ENCODE measurements at regions of chr3 and their contacts with region 1.

Region 1: DNA sequence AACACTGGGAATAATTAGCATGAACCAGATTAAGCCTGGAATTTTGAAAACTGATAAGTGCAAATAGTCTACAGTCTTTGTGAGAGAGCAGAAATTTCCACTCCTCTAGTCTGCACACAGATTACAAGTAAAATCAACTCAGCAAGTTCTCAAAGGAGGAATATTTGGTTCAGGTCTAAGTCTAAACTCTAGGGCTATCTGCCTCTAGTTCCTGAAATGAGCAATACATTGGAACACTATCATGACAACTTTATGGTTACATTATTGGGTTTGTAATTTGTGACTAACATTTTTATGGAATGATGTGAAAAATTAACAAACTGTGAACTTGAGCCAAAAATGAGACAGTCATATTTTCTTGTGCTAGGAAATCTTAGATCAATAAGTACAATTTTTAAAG is 30.8 kb upstream of the ADGRG7 start:
- DNase-seq: no peak
- ATAC-seq: no peak
- H3K4me3 ChIP-seq: no peak overlapping the region
- H3K27ac ChIP-seq: no peak overlapping the region
- H3K4me1 ChIP-seq: no peaks in the 10 kb centered on the region
- H3K27me3 ChIP-seq: no peaks in the 10 kb centered on the region
- CTCF ChIP-seq: no peak
- EP300 ChIP-seq: no peak
- POLR2A ChIP-seq: no peak
- RAD21 ChIP-seq: no peak

Region 2: GRCh38 chr3:100563732-100564131 is 14.9 kb before region 1 on chr3:
- CTCF ChIA-PET with region 1: no interaction called
- POLR2A ChIA-PET with region 1: no interaction called
- in situ Hi-C with region 1: no loop called
- intact Hi-C with region 1: loop called (anchors 1 kb)
- DNase-seq: no peak
- ATAC-seq: no peak
- H3K4me3 ChIP-seq: no peak overlapping the region
- H3K27ac ChIP-seq: no peak overlapping the region
- H3K4me1 ChIP-seq: no peaks in the 10 kb centered on the region
- H3K27me3 ChIP-seq: no peaks in the 10 kb centered on the region
- CTCF ChIP-seq: no peak
- EP300 ChIP-seq: no peak
- POLR2A ChIP-seq: no peak
- RAD21 ChIP-seq: no peak

Region 3: DNA sequence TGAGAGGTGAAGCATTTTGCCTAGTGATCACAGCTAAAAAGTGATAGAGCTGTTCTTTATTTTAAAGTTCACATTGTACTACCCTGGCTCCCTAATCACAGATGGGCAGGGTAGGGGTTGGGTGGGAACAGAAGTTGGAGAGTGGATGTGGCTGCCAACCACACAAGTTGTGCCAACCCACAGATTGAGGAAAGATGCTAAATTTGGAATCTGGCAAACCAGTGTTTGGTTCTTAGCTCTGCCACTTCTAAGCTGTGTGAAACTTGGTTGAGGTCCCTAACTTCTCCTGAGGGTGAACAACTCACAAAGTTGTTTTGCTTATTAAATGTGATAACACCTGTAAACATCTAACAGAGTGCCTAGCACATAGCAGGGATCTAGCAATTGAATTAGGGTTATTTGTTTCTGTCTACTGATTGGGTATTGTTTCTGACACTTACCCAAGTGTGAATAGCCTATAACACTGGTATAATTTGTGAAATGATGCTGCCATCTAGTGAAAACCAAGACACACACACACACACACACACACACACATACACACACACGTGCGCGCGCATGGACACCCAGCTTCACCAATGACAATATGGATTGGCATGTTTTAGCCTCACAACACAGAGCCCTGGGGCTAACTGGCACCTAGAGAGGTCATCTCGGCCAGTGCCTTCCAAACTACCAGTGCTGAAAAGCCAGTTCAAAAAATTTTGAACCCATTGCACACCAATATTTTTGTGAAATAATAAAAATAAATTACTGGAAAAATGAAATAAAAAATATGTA is 56.0 kb after region 1 on chr3:
- CTCF ChIA-PET with region 1: no interaction called
- POLR2A ChIA-PET with region 1: no interaction called
- in situ Hi-C with region 1: no loop called
- intact Hi-C with region 1: no loop called
- DNase-seq: peak; percentile 38
- ATAC-seq: peak; percentile 85
- H3K4me3 ChIP-seq: peak overlapping the region in 2 of 3 experiments; percentile 43 to 49; a peak in 1 of 6 replicates
- H3K27ac ChIP-seq: no peak overlapping the region
- H3K4me1 ChIP-seq: peaks cover 18% of the 10 kb centered on the region
- H3K27me3 ChIP-seq: no peaks in the 10 kb centered on the region
- CTCF ChIP-seq: peak; percentile 90
- EP300 ChIP-seq: no peak
- POLR2A ChIP-seq: no peak
- RAD21 ChIP-seq: peak; percentile 32; the same call in 1 of the 2 replicates

Measured in HepG2 (cell line).